ENCODE measurements at regions of chr13 and their contacts with region 1.

Region 1: DNA sequence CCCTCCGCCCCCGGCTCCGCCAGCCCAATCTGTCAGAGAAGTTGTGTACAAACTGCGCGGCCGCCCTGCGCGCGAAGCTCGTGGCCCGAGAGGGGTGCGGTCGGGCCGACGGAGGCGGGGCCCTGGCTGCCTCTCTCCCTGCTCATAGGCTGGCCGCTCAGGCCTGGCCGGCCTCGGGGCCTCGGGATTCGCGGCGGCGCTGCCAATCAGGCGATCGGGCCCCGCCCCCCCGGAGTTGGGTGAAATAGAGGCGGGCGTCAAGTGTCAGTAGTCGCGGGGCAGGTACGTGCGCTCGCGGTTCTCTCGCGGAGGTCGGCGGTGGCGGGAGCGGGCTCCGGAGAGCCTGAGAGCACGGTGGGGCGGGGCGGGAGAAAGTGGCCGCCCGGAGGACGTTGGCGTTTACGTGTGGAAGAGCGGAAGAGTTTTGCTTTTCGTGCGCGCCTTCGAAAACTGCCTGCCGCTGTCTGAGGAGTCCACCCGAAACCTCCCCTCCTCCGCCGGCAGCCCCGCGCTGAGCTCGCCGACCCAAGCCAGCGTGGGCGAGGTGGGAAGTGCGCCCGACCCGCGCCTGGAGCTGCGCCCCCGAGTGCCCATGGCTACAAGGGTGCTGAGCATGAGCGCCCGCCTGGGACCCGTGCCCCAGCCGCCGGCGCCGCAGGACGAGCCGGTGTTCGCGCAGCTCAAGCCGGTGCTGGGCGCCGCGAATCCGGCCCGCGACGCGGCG is at the start of gene KLF5:
- DNase-seq: peak; percentile 92
- H3K4me3 Mint-ChIP-seq: peak within 1 kb of the TSS; percentile 87
- H3K27ac Mint-ChIP-seq: peak within 1 kb of the TSS; percentile 87
- H3K4me1 Mint-ChIP-seq: peaks cover 8% of the 10 kb centered on the region
- H3K27me3 Mint-ChIP-seq: no peaks in the 10 kb centered on the region
- CTCF ChIP-seq: no peak
- total RNA-seq, gene KLF5: 121 and 136 TPM in 2 replicates

Region 2: GRCh38 chr13:72839831-72840426 is 219.0 kb before region 1 on chr13:
- CTCF ChIA-PET with region 1: interaction called, 3 read pairs
- intact Hi-C with region 1: loop called (anchors 5 kb)
- DNase-seq: peak; percentile 44
- H3K4me3 Mint-ChIP-seq: no peak overlapping the region
- H3K27ac Mint-ChIP-seq: no peak overlapping the region
- H3K4me1 Mint-ChIP-seq: peaks cover 9% of the 10 kb centered on the region
- H3K27me3 Mint-ChIP-seq: no peaks in the 10 kb centered on the region
- CTCF ChIP-seq: peak; percentile 19

Region 3: GRCh38 chr13:72963762-72964161 is 95.1 kb before region 1 on chr13:
- CTCF ChIA-PET with region 1: no interaction called
- intact Hi-C with region 1: loop called (anchors 10 kb)
- DNase-seq: no peak
- H3K4me3 Mint-ChIP-seq: no peak overlapping the region
- H3K27ac Mint-ChIP-seq: no peak overlapping the region
- H3K4me1 Mint-ChIP-seq: peaks cover 8% of the 10 kb centered on the region
- H3K27me3 Mint-ChIP-seq: no peaks in the 10 kb centered on the region
- CTCF ChIP-seq: no peak

Region 4: GRCh38 chr13:73142071-73142470 is 83.2 kb after region 1 on chr13:
- CTCF ChIA-PET with region 1: no interaction called
- intact Hi-C with region 1: no loop called
- DNase-seq: no peak
- H3K4me3 Mint-ChIP-seq: no peak overlapping the region
- H3K27ac Mint-ChIP-seq: peak overlapping the region; percentile 88
- H3K4me1 Mint-ChIP-seq: peaks cover 11% of the 10 kb centered on the region
- H3K27me3 Mint-ChIP-seq: no peaks in the 10 kb centered on the region
- CTCF ChIP-seq: no peak

Measured in Calu3 (cell line).